Naive thymus-derived CD4-positive, alpha-beta T cell (primary cell): ENCODE measurements at regions of chr11 and their contacts with region 1.

Region 1: DNA sequence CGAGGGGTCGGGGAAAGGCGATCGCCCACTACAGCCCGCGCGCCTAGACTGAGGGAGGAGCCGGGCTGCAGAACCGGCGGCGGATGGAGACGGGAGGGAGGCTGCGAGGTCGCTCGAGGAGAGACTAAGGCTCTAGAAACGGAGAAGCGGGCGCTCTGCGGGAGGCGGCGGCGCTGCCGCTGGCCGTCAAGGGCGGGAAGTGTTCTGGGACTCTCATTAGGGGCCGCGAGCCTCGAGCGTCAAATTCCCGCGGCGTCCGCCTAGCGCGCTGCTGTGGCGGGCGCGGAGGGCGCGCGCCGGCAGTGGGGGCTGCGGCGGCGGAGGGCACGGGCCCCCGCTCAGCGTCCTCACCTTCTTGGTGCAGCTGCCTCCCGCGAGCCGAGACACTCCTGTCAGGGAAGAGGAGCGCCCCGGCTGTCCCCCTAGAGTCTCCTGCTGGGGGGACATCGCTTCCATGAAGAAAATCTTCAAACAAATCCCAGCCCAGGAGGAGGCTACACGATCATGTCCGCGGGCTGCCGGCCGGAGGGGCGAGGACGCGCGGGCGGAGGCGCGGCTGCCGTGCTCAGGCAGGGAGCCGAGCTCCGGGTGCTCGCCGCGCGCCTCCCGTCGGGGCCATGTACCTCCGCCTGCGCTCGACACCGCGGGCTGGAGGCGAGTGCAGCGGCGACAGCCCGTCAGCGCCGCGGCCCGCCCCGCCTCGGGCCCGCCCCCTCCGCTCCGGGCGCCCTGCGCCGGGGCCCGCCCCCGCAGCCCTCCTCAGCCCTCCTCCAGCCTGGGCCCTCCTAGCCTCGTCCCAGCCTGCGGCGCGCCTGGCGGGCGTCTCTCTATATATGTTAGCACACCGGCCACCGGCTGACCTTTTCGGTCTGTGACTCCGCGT is at the start of gene ARHGAP20:
- DNase-seq: peak in 8 of 9 donors; percentile 1 to 64 (median 19)
- ATAC-seq: peak; percentile 84
- H3K4me3 ChIP-seq: peak within 1 kb of the TSS; percentile 43
- H3K4me3 Mint-ChIP-seq: peak within 1 kb of the TSS; percentile 70 to 86 (median 76)
- H3K27ac ChIP-seq: no peak within 1 kb of the TSS
- H3K27ac Mint-ChIP-seq: no peak within 1 kb of the TSS
- H3K4me1 ChIP-seq: peaks cover 3 to 7% of the 10 kb centered on the region in 2 donors
- H3K4me1 Mint-ChIP-seq: peaks cover 13 to 28% (median 19%) of the 10 kb centered on the region in 7 donors
- H3K27me3 ChIP-seq: peaks cover 3 to 11% of the 10 kb centered on the region in 2 donors
- H3K27me3 Mint-ChIP-seq: peaks cover 62 to 71% (median 66%) of the 10 kb centered on the region in 5 donors
- total RNA-seq, gene ARHGAP20: 0.08 to 0.11 TPM in 2 of 5 experiments, not detected in the others

Region 2: GRCh38 chr11:110453684-110454354 is 258.2 kb before region 1 on chr11:
- CTCF ChIA-PET with region 1: no interaction called
- POLR2A ChIA-PET with region 1: no interaction called
- intact Hi-C with region 1: loop called in 1 of 2 experiments (anchors 10 kb)
- DNase-seq: no peak
- ATAC-seq: no peak
- H3K4me3 ChIP-seq: no peak overlapping the region
- H3K4me3 Mint-ChIP-seq: peak overlapping the region in 1 of 10 donors; percentile 71
- H3K27ac ChIP-seq: no peak overlapping the region
- H3K27ac Mint-ChIP-seq: peak overlapping the region in 1 of 9 donors; percentile 73
- H3K4me1 ChIP-seq: no peaks in the 10 kb centered on the region
- H3K4me1 Mint-ChIP-seq: peaks cover 19 to 54% (median 41%) of the 10 kb centered on the region in 7 donors
- H3K27me3 ChIP-seq: no peaks in the 10 kb centered on the region
- H3K27me3 Mint-ChIP-seq: no peaks in the 10 kb centered on the region